Activated B cell treated with CpG ODN at 0.5 μM for 24 hours (primary cell): ENCODE measurements at regions of chr9 and their contacts with region 1.

Region 1: GRCh38 chr9:6894135-6894534 is 136.4 kb downstream of the KDM4C start:
- DNase-seq: no peak
- ATAC-seq: no peak
- H3K4me3 Mint-ChIP-seq: no peak overlapping the region
- H3K27ac Mint-ChIP-seq: no peak overlapping the region
- H3K4me1 Mint-ChIP-seq: peaks cover 38% of the 10 kb centered on the region
- H3K27me3 Mint-ChIP-seq: no peaks in the 10 kb centered on the region
- CTCF ChIP-seq: no peak

Region 2: DNA sequence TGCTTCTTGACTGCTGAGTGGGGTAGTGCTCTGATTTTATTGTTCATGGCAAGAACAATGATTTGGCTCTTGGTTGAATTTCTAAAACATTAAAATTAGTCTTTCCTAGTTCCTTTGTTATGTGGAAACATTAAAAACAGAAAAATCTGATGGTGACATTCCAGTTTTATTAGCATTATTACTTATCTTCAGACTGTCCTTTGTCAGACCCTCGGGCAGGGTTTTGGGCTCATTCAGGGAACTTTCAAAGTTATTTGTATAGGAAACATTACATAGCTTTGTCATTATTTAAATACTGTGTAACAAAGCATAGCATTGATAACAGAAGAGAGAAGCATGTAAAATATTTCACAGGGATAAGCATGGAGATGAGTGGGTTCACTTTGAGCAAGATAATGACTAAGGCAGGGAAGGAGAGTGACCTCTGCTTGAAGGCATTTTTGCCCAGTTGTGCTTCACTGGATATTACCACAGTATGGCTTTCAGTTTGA is 16.4 kb before region 1 on chr9:
- CTCF ChIA-PET with region 1: no interaction called
- POLR2A ChIA-PET with region 1: no interaction called
- intact Hi-C with region 1: loop called (anchors 2 kb)
- DNase-seq: no peak
- ATAC-seq: no peak
- H3K4me3 Mint-ChIP-seq: no peak overlapping the region
- H3K27ac Mint-ChIP-seq: no peak overlapping the region
- H3K4me1 Mint-ChIP-seq: peaks cover 47% of the 10 kb centered on the region
- H3K27me3 Mint-ChIP-seq: no peaks in the 10 kb centered on the region
- CTCF ChIP-seq: no peak

Region 3: GRCh38 chr9:6917162-6917561 is 23.0 kb after region 1 on chr9:
- CTCF ChIA-PET with region 1: no interaction called
- POLR2A ChIA-PET with region 1: no interaction called
- intact Hi-C with region 1: no loop called
- DNase-seq: no peak
- ATAC-seq: no peak
- H3K4me3 Mint-ChIP-seq: no peak overlapping the region
- H3K27ac Mint-ChIP-seq: peak overlapping the region; percentile 2
- H3K4me1 Mint-ChIP-seq: peaks cover 51% of the 10 kb centered on the region
- H3K27me3 Mint-ChIP-seq: no peaks in the 10 kb centered on the region
- CTCF ChIP-seq: no peak